B cell (primary cell): ENCODE measurements at regions of chr4 and their contacts with region 1.

Region 1: GRCh38 chr4:128191115-128191781 is 96.4 kb downstream of the PGRMC2 start:
- DNase-seq: peak; percentile 81
- ATAC-seq: peak; percentile 97
- H3K4me3 ChIP-seq: no peak overlapping the region
- H3K4me3 Mint-ChIP-seq: no peak overlapping the region
- H3K27ac ChIP-seq: no peak overlapping the region
- H3K27ac Mint-ChIP-seq: no peak overlapping the region
- H3K4me1 ChIP-seq: no peaks in the 10 kb centered on the region
- H3K4me1 Mint-ChIP-seq: no peaks in the 10 kb centered on the region
- H3K27me3 ChIP-seq: no peaks in the 10 kb centered on the region
- H3K27me3 Mint-ChIP-seq: no peaks in the 10 kb centered on the region
- CTCF ChIP-seq: peak; percentile 94

Region 2: GRCh38 chr4:128220286-128221235 is 29.3 kb after region 1 on chr4:
- CTCF ChIA-PET with region 1: interaction called, 7 read pairs
- POLR2A ChIA-PET with region 1: no interaction called
- intact Hi-C with region 1: loop called (anchors 2 kb)
- DNase-seq: peak; percentile 8
- ATAC-seq: no peak
- H3K4me3 ChIP-seq: no peak overlapping the region
- H3K4me3 Mint-ChIP-seq: no peak overlapping the region
- H3K27ac ChIP-seq: no peak overlapping the region
- H3K27ac Mint-ChIP-seq: no peak overlapping the region
- H3K4me1 ChIP-seq: no peaks in the 10 kb centered on the region
- H3K4me1 Mint-ChIP-seq: no peaks in the 10 kb centered on the region
- H3K27me3 ChIP-seq: no peaks in the 10 kb centered on the region
- H3K27me3 Mint-ChIP-seq: no peaks in the 10 kb centered on the region
- CTCF ChIP-seq: no peak

Region 3: DNA sequence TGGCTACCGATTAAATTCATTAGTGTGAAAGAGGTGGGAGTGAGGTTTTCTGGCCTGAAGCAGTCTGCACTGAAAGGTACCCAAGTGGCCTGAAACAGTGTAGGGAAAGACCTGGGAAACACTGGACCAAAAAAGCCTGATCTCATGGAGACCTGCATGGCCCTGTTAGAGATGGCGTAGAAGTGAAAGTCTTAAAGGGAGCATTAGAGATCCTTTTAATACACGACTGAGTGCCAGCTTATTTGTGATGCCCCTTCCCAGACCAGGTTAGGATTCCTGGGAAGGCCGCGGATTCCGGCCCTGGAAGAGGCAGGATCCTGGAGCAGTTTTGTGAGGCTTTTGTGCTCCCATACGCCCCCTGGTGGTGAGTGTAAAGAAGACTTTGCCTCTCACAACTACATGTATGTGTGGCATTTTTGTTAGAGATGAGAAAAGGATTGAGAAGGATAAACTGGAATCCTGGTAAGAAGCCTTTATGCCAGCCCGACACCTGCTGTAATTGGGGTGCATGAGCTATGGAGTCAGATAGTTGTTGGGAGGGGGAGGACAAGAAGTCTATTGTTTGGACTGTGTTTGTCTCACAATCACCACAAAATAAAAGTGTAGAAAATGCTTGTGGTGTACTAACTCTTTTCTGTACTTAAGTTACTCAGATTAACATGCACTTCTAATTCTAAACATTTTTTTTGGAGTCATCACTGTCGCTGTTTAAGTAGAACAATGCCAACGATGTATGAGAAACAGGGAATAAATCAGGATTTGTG is 672.2 kb after region 1 on chr4:
- CTCF ChIA-PET with region 1: interaction called, 28 read pairs
- POLR2A ChIA-PET with region 1: no interaction called
- intact Hi-C with region 1: no loop called
- DNase-seq: peak; percentile 75
- ATAC-seq: peak; percentile 45
- H3K4me3 ChIP-seq: no peak overlapping the region
- H3K4me3 Mint-ChIP-seq: no peak overlapping the region
- H3K27ac ChIP-seq: no peak overlapping the region
- H3K27ac Mint-ChIP-seq: no peak overlapping the region
- H3K4me1 ChIP-seq: peaks cover 5 to 19% of the 10 kb centered on the region in 2 donors
- H3K4me1 Mint-ChIP-seq: peaks cover 35% of the 10 kb centered on the region
- H3K27me3 ChIP-seq: no peaks in the 10 kb centered on the region
- H3K27me3 Mint-ChIP-seq: no peaks in the 10 kb centered on the region
- CTCF ChIP-seq: peak; percentile 90

Region 4: GRCh38 chr4:129641179-129641578 is 1449.9 kb after region 1 on chr4:
- CTCF ChIA-PET with region 1: interaction called, 15 read pairs
- POLR2A ChIA-PET with region 1: no interaction called
- intact Hi-C with region 1: no loop called
- DNase-seq: peak; percentile 35
- ATAC-seq: no peak
- H3K4me3 ChIP-seq: no peak overlapping the region
- H3K4me3 Mint-ChIP-seq: no peak overlapping the region
- H3K27ac ChIP-seq: no peak overlapping the region
- H3K27ac Mint-ChIP-seq: no peak overlapping the region
- H3K4me1 ChIP-seq: no peaks in the 10 kb centered on the region
- H3K4me1 Mint-ChIP-seq: no peaks in the 10 kb centered on the region
- H3K27me3 ChIP-seq: no peaks in the 10 kb centered on the region
- H3K27me3 Mint-ChIP-seq: no peaks in the 10 kb centered on the region
- CTCF ChIP-seq: peak; percentile 77